Breast epithelium (tissue), 4 donors: ENCODE measurements at regions of chr4 and their contacts with region 1.

Region 1: DNA sequence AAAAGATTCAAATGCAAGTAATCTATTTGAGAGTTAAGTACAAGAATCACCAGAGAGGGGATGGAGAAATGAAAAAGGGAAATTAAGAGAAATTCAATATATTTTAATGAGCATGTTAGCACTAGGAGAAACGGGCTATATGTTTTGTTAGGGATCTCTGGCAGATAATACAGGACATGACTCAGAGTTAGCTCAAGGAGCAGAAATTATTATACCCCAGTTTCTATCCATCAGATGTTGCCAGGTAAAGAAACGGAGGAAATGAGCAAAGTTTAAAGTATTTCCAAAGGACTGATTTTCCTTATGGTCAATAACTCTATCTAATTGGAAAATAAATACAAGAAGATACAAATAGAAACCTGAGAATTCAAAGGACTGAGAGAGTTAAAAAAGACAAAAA is 867.6 kb downstream of the TRAM1L1 start:
- DNase-seq: no peak
- H3K4me3 ChIP-seq: no peak overlapping the region
- H3K27ac ChIP-seq: no peak overlapping the region
- H3K4me1 ChIP-seq: no peaks in the 10 kb centered on the region
- H3K27me3 ChIP-seq: no peaks in the 10 kb centered on the region
- CTCF ChIP-seq: no peak
- POLR2A ChIP-seq: no peak

Region 2: GRCh38 chr4:118005883-118006282 is 1788.1 kb after region 1 on chr4:
- intact Hi-C with region 1: loop called (anchors 10 kb)
- DNase-seq: no peak
- H3K4me3 ChIP-seq: no peak overlapping the region
- H3K27ac ChIP-seq: no peak overlapping the region
- H3K4me1 ChIP-seq: no peaks in the 10 kb centered on the region
- H3K27me3 ChIP-seq: no peaks in the 10 kb centered on the region
- CTCF ChIP-seq: no peak
- POLR2A ChIP-seq: no peak